ENCODE measurements at regions of chr2 and their contacts with region 1.

Region 1: DNA sequence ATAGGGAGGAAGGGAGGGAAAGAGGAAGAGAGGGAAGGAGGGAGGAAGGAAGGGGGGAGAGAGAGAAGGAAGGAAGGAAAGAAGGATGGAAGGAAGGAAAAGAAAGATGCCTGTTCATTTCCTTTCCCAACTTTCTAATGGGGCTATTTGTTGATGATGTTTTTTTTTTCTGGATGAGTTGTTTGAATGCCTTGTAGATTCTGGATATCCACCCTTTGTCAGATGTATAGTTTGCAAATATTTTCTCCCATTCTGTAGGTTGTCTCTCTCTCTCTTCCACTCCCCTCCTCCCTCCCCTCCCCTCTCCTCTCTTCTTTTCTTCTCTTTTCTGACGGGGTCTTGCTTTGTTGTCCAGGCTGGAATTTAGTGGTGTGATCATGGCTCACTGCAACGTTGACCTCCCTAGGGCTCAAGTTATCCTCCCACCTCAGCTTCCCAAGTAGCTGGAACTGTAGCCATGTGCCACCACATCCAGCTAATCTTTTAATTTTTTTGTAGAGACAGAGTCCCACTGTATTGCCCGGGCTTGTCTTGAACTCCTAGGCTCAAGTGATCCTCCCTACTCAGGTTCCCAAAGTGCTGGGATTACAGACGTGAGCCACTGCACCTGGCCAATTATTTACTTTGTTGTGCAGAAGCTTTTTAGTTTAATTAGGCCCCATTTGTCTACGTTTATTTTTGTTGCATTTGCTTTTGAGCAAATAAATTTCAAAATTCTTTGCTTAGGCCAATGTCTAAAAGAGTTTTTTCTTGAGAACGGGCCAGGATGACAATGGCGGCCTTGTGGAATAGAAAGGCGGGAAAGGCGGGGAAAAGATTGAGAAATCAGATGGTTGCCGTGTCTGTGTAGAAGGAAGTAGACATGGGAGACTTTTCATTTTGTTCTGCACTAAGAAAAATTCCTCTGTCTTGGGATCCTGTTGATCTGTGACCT is 57.3 kb upstream of the FAM117B start:
- DNase-seq: no peak
- H3K4me3 Mint-ChIP-seq: no peak overlapping the region
- H3K27ac Mint-ChIP-seq: no peak overlapping the region
- H3K4me1 Mint-ChIP-seq: no peaks in the 10 kb centered on the region
- H3K27me3 Mint-ChIP-seq: no peaks in the 10 kb centered on the region
- CTCF ChIP-seq: no peak

Region 2: DNA sequence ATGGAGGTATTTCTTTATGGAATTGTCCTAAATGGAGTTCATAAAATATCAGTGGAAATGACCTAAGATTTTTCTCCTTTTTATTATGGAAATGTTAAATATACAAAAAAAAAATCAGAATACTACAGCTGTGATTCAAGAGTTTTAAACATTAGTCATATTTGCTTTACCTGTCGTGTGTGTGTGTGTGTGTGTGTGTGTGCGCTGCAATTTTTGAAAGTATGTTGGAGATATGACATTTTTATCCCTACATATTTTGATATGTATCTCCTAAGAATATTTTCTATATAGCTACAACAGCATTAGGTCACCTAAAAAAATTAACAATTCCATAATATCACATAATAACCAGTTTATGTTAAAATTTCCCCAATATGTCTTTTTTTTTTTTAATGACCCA is 142.7 kb after region 1 on chr2:
- CTCF ChIA-PET with region 1: no interaction called
- POLR2A ChIA-PET with region 1: no interaction called
- intact Hi-C with region 1: no loop called
- DNase-seq: no peak
- H3K4me3 Mint-ChIP-seq: no peak overlapping the region
- H3K27ac Mint-ChIP-seq: no peak overlapping the region
- H3K4me1 Mint-ChIP-seq: peaks cover 12% of the 10 kb centered on the region
- H3K27me3 Mint-ChIP-seq: no peaks in the 10 kb centered on the region
- CTCF ChIP-seq: no peak

Region 3: GRCh38 chr2:202831242-202832220 is 254.0 kb after region 1 on chr2:
- CTCF ChIA-PET with region 1: no interaction called
- POLR2A ChIA-PET with region 1: no interaction called
- intact Hi-C with region 1: loop called (anchors 5 kb)
- DNase-seq: peak; percentile 84
- H3K4me3 Mint-ChIP-seq: no peak overlapping the region
- H3K27ac Mint-ChIP-seq: no peak overlapping the region
- H3K4me1 Mint-ChIP-seq: peaks cover 8% of the 10 kb centered on the region
- H3K27me3 Mint-ChIP-seq: no peaks in the 10 kb centered on the region
- CTCF ChIP-seq: peak; percentile 46

Region 4: GRCh38 chr2:202870431-202871299 is 293.1 kb after region 1 on chr2:
- CTCF ChIA-PET with region 1: no interaction called
- POLR2A ChIA-PET with region 1: no interaction called
- intact Hi-C with region 1: loop called (anchors 1 kb)
- DNase-seq: peak; percentile 86
- H3K4me3 Mint-ChIP-seq: peak overlapping the region; percentile 72
- H3K27ac Mint-ChIP-seq: peak overlapping the region; percentile 57
- H3K4me1 Mint-ChIP-seq: peaks cover 5% of the 10 kb centered on the region
- H3K27me3 Mint-ChIP-seq: no peaks in the 10 kb centered on the region
- CTCF ChIP-seq: peak; percentile 52

Region 5: DNA sequence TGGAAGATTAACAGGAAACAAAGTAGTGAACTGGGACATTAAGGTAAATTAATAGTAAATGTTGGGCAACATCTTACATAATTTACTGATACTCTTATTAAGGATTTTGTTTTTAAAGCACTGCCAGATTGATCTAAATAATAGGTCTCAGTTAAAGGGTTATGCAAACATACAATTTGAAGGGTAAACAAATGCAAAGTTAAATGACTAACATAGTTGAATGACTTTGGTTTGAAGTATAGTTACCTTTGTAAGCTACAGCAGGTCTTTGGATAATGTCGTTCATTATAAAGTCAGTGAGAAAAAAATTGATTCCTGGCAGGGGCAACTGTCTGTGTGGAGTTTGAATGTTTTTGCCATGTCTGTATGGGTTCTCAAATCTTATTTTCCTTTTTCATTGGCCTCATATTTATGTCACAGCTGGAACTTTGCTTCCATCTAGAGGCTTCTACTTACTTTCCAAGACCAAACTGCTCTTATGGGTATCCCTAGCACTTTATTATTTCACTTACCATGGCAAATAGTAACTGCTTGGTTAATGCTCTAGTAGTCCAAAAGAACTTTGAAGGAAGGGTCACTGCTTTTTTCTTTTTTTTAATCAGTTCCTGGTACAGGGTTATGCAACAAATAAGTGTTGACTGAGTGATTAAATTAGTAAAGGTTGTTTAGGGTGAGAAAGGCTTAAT is 544.9 kb after region 1 on chr2:
- CTCF ChIA-PET with region 1: no interaction called
- POLR2A ChIA-PET with region 1: no interaction called
- intact Hi-C with region 1: loop called (anchors 10 kb)
- DNase-seq: peak; percentile 14
- H3K4me3 Mint-ChIP-seq: no peak overlapping the region
- H3K27ac Mint-ChIP-seq: no peak overlapping the region
- H3K4me1 Mint-ChIP-seq: no peaks in the 10 kb centered on the region
- H3K27me3 Mint-ChIP-seq: no peaks in the 10 kb centered on the region
- CTCF ChIP-seq: peak; percentile 9

Region 6: DNA sequence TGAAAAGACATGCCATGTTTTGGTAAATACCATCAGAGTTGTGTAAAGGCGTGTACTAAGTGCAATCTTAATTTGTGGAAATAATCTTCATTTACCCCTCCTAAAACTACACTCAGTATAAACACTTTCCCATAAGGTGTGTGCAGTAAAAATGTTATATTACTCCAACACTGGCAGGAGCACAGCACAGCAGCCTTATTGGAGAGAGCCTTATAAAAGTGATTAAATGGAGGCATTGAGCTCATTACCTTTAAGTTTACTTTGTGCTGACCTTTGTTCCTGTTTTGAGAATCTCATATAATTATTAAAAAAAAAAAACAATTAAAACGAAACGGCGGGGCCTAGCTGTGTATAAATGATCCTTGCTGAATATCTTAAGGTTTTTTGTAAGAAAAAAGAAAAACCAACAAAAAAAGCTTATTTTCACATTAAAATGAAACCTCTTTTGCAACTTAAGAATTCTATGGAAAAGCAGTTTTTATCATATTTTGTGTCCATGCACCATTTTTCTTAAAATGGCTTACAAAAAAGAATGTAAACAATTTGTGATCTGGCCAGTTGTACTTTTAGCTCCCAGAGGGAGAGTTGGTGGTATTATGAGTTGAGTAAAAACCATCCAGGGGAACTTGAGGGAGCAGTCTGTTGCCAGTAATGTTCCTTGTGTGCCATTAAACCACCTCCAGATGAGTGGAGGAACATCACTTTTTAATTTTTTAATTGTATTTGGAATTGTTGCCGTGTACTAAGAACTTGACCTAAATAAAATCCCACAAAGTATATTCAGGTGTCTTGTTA is 854.1 kb after region 1 on chr2:
- CTCF ChIA-PET with region 1: no interaction called
- POLR2A ChIA-PET with region 1: no interaction called
- intact Hi-C with region 1: loop called (anchors 5 kb)
- DNase-seq: no peak
- H3K4me3 Mint-ChIP-seq: no peak overlapping the region
- H3K27ac Mint-ChIP-seq: no peak overlapping the region
- H3K4me1 Mint-ChIP-seq: no peaks in the 10 kb centered on the region
- H3K27me3 Mint-ChIP-seq: no peaks in the 10 kb centered on the region
- CTCF ChIP-seq: no peak

Region 7: DNA sequence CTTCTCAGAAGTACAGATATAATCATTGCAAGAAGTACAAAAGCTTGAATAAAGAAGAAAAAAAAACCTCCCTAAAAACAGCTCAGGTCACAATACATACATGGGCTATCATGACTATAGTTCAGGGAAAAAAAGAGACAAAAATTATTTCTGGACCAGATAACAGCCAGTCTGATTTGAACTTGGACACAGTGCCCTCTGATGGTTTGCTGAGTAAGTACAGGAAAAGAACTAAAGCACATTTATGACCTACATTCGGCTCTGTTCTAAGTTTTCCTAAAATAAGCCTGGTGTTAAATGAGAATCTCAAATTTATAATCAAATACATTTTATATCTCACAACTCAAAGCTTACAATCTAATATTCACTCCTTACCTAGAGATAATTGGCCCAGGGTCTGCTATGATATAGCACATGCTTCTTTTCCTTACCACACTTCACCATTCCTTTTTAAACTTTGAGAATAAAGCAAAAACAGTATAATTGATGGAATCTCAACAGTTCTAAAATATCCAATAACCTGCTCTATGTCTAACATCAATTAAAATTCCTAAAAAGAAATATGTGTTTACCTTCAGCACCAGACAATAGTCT is 876.4 kb after region 1 on chr2:
- CTCF ChIA-PET with region 1: no interaction called
- POLR2A ChIA-PET with region 1: no interaction called
- intact Hi-C with region 1: loop called (anchors 5 kb)
- DNase-seq: peak; percentile 60
- H3K4me3 Mint-ChIP-seq: no peak overlapping the region
- H3K27ac Mint-ChIP-seq: no peak overlapping the region
- H3K4me1 Mint-ChIP-seq: peaks cover 14% of the 10 kb centered on the region
- H3K27me3 Mint-ChIP-seq: no peaks in the 10 kb centered on the region
- CTCF ChIP-seq: peak; percentile 62